ENCODE measurements at regions of chr22 and their contacts with region 1.

Region 1: DNA sequence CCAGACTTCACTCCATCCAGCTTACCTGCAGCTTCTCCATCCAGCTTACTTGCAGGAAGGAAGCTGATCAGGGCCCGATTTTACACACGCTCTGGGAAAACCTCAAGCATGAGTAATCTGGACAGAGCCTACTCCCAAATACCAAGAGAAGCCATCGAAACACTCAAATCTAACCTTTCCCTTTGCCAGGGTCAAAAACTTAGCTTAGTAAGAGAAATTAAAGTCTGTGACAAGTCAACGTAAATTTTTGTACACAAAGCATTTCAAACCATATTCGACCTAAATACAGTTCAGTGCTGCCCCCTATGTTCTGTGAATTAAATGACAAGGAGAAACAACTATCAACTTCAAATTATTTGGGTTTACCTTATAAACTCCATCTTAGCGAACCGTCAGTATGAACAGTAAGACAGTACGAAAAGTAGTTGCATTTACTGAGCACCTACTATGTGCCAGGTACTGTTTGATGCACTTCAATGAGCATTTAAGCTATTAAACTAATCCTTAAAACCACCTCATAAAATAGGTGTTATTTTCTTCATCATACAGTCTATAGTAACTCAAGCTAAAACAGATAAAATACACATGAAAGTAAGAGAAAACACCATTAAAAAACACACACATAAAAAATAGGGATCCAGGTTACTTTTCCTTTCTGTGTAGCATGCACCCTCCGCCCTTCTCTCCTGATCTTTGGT is 36.9 kb downstream of the ARFGAP3 start:
- DNase-seq: peak; percentile 59
- H3K4me3 ChIP-seq: no peak overlapping the region
- CTCF ChIP-seq: peak; percentile 40

Region 2: GRCh38 chr22:42621505-42622002 is 198.7 kb before region 1 on chr22:
- CTCF ChIA-PET with region 1: interaction called, 60 read pairs
- POLR2A ChIA-PET with region 1: no interaction called
- DNase-seq: no peak
- H3K4me3 ChIP-seq: no peak overlapping the region
- CTCF ChIP-seq: peak; percentile 97

Region 3: DNA sequence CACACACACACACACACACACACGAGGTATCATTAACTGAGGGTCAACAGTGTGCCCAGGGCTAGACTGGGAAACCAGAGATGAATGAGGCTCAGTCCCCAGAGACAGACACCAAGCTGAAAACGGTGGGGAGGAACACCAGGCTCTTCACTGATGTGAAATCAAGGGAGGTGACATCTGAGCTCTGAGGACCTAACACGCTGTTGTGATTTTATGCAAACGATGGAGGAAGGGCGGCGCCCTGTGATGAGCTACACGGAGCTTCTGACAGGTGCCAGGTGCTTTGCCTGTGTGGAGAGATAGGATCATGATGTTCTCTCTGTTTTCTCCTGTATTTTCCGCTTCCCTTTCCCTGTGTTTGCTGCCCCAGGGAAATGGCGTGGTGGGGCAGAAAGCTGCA is 164.5 kb before region 1 on chr22:
- CTCF ChIA-PET with region 1: interaction called, 62 read pairs
- POLR2A ChIA-PET with region 1: no interaction called
- DNase-seq: no peak
- H3K4me3 ChIP-seq: no peak overlapping the region
- CTCF ChIP-seq: no peak

Region 4: GRCh38 chr22:42683578-42684283 is 136.5 kb before region 1 on chr22:
- CTCF ChIA-PET with region 1: interaction called, 11 read pairs
- POLR2A ChIA-PET with region 1: no interaction called
- DNase-seq: no peak
- H3K4me3 ChIP-seq: no peak overlapping the region
- CTCF ChIP-seq: no peak

Region 5: GRCh38 chr22:42734385-42734784 is 85.8 kb before region 1 on chr22:
- CTCF ChIA-PET with region 1: no interaction called
- POLR2A ChIA-PET with region 1: no interaction called
- DNase-seq: no peak
- H3K4me3 ChIP-seq: no peak overlapping the region
- CTCF ChIP-seq: no peak

Region 6: GRCh38 chr22:42794551-42795510 is 25.4 kb before region 1 on chr22:
- CTCF ChIA-PET with region 1: interaction called, 22 read pairs
- POLR2A ChIA-PET with region 1: no interaction called
- DNase-seq: no peak
- H3K4me3 ChIP-seq: no peak overlapping the region
- CTCF ChIP-seq: peak; percentile 31

Region 7: GRCh38 chr22:42844756-42845155 is 24.5 kb after region 1 on chr22:
- CTCF ChIA-PET with region 1: interaction called, 18 read pairs
- POLR2A ChIA-PET with region 1: no interaction called
- DNase-seq: no peak
- H3K4me3 ChIP-seq: no peak overlapping the region
- CTCF ChIP-seq: no peak

Region 8: DNA sequence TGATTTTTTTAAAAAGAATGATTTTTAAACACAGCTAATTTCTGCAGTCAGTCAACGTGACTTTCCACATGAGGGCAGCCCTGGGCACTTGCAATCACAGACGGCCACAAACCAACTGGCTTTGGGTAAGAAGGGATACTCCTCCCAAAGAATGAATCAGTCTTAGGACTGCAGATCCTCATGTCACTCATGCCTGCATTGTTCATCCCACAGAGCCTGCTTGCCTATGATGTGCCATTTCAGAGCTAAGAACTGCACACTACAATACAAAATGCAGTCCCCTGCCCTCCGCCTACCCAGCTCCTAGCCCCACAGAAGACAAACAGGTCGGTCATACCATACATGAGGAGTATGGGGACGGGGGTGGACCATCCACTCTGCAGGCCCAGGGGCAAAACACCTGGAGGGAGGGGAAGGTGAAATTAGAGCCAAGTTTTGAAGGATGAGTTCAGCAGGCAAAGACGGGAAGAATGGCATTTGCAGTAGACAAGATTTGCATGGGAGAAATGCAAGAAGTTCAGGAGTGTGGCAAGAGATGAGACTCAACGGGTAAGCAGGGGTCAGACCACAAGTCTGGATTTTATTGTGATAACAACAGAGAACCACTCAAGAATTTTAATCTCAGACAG is 170.0 kb after region 1 on chr22:
- CTCF ChIA-PET with region 1: no interaction called
- POLR2A ChIA-PET with region 1: no interaction called
- DNase-seq: peak; percentile 63
- H3K4me3 ChIP-seq: no peak overlapping the region
- CTCF ChIP-seq: peak; percentile 60

Region 9: DNA sequence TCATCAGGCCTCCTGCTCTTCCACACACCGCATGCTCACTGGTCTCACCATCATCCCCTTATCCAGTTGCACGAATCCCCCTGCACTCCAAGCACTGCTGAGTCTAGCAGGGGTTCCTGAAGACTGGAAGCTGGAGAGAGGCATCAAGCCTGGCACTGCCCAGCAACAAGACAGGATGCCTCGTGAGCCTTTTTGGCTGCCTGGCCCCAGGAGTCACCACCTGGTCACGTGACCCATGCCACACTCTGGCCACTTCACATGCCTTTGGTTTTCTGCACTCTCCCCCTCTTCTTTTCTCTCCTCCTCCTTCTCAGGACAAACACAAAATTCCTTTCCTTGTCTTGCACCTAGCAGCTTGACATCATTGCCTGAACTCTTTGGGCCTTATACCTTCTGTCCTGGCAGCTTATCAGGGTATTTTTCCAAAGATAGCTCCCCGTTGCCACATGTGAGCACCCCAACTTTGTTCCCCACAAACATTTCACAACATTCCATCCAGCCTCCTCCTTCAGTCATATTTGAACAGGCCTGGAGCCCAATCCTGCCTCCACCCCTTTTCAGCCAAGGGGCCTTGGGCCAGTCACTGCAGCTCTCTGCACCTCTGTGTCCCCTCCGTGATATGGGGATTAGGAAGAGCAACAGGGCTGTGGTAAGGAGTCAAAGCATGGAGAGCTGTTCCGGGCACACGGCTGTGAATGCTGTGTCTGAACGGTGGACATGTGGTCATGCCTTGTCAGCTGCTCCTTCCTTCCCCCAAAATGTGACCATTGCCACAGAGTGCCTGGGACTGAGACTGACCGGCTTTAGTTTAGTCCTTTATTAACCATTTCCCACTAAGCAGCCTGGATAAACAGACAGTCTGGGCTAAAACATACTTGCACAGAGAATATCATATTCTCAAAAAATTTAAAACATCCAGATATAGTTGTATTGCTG is 197.6 kb after region 1 on chr22:
- CTCF ChIA-PET with region 1: no interaction called
- POLR2A ChIA-PET with region 1: no interaction called
- DNase-seq: no peak
- H3K4me3 ChIP-seq: no peak overlapping the region
- CTCF ChIP-seq: no peak

Measured in AG04449 (cell line).